MCF 10A (cell line): ENCODE measurements at regions of chr17 and their contacts with region 1.

Region 1: DNA sequence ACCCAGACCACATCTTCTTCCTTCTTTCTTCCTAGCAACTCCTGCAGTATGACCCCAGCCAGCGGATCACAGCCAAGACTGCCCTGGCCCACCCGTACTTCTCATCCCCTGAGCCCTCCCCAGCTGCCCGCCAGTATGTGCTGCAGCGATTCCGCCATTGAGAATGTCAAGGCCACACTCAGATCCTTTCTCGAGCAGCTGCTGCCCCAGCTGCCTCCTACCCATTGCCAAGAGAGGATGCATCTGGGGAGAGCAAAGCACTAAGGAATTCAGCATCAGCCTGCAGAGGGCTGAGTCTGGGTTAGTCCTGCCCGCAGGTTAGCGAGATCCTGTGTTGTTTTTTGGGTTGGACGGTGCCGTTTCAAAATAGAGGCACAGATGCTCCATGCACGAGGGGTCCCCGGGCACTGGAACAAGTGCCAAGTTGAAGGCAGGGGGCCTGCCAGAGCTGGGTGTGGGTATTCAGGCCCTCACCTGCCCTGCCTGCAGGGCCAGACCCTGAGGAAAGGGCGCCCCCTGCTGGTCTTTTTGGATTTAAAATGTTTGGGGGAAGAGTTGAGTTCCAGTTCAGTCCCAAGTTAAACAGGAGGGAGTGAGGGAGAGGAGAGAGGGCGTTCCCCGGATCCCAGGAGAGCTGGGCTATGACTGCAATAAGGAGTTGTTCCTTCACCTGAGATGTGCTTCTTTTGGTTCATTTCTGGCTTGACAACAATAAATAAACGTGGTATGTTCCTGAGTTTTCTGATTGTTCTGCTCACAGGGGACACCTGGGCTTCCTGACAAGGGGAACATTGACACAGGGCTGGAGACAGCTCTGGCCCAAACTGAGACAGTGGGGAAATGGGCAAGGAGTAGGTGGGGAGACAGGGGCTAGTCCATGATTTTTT is 4.9 kb downstream of the CDK3 start:
- DNase-seq: peak; percentile 75
- H3K4me3 Mint-ChIP-seq: no peak overlapping the region
- H3K27ac Mint-ChIP-seq: no peak overlapping the region
- H3K4me1 Mint-ChIP-seq: peaks cover 6% of the 10 kb centered on the region
- H3K27me3 Mint-ChIP-seq: no peaks in the 10 kb centered on the region
- CTCF ChIP-seq: peak; percentile 72

Region 2: DNA sequence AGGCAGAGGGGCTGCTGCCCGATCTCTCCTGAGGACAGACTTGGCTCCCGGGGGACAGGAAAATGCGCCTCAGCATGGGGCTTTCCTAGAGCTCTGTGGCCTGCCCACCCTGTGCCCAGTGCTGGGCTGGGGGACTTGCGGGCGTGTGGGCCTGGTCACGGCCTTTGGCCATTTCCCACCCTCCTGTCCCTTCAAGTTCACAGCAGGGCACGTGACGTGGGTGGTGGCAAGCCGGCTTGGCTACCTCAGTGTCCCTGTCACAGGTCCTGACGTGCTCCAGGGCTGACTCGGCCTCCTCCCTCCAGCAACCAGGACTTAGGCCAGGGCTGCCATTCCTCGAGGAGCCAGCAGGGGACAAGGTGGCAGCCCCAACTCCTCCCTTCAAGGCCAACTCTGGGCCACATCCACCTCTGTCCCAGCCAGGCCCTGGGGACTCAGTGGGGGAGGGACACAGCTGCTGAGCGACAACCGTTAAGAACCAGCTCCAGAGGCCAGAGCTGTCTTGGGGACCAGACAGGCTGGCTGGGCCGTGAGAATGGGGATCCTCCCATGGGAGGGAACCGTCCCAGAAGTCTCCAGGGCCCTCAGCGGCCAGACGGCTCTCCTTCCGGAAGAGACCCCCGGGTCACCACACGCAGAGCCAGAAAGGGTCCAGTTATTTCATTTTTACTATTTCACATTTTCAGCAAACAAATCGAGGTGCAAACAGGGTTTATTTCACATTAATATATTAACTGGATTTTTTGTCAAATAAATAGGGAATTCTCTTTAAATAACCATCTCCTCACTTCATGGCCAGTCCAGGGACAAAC is 160.3 kb before region 1 on chr17:
- CTCF ChIA-PET with region 1: no interaction called
- POLR2A ChIA-PET with region 1: no interaction called
- intact Hi-C with region 1: no loop called
- DNase-seq: peak; percentile 77
- H3K4me3 Mint-ChIP-seq: peak overlapping the region; percentile 16
- H3K27ac Mint-ChIP-seq: no peak overlapping the region
- H3K4me1 Mint-ChIP-seq: peaks cover 14% of the 10 kb centered on the region
- H3K27me3 Mint-ChIP-seq: no peaks in the 10 kb centered on the region
- CTCF ChIP-seq: peak; percentile 81

Region 3: GRCh38 chr17:75904749-75905521 is 100.6 kb before region 1 on chr17 and contains the start of gene MRPL38:
- CTCF ChIA-PET with region 1: interaction called, 17 read pairs
- POLR2A ChIA-PET with region 1: interaction called, 24 read pairs
- intact Hi-C with region 1: loop called (anchors 1 kb)
- DNase-seq: peak; percentile 93
- H3K4me3 Mint-ChIP-seq: peak within 1 kb of the TSS; percentile 91
- H3K27ac Mint-ChIP-seq: peak within 1 kb of the TSS; percentile 92
- H3K4me1 Mint-ChIP-seq: peaks cover 16% of the 10 kb centered on the region
- H3K27me3 Mint-ChIP-seq: no peaks in the 10 kb centered on the region
- CTCF ChIP-seq: peak; percentile 96
- total RNA-seq, gene MRPL38: 97.9 and 111 TPM in 2 replicates